Thyroid gland (tissue), 4 donors: ENCODE measurements at regions of chrX and their contacts with region 1.

Region 1: GRCh38 chrX:72003811-72004750 is 93.4 kb downstream of the NHSL2 start:
- DNase-seq: peak; percentile 70 to 72
- H3K4me3 ChIP-seq: no peak overlapping the region
- H3K27ac ChIP-seq: peak overlapping the region in 1 of 3 donors; percentile 46
- H3K4me1 ChIP-seq: peaks cover 0 to 4% of the 10 kb centered on the region in 2 donors
- H3K27me3 ChIP-seq: no peaks in the 10 kb centered on the region
- CTCF ChIP-seq: peak in 5 of 6 experiments; percentile 15 to 41 (median 38)
- POLR2A ChIP-seq: no peak

Region 2: DNA sequence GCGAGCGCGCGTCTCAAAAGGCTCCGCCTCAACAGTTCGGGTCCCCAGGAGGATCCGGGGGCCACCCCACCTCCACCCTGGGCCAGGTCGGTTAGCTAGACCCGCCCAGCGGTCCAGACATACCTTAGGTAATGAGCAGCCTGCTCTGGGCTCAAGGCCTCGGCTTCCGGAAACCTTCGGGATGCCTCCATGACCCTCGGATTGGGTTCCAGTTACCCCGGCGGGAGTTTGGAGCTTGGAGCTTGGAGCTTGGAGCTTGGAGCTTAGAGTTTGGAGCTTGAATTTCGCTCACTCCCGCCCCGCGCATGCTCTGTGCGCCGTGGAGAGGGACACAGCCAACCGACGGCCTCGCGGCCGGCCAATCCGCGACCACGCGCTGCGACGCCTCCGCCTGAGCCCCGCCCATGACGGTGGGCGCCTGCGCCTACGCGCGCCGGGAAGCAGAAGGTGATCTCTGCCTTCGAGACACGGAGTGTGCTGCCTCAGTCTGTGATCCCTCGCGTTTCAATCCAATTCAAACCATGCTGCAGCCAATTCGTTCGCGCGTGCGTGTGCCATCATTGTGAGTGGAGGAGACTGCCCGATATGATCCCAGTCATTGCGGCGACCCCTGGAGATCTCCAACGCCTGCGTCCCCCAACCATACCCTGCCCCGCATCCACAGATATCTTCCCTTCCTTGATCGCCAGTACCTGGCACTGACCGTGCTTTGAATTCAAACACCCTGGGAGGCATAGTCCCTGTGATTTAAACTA is 234.8 kb after region 1 on chrX and contains the start of gene ERCC6L:
- intact Hi-C with region 1: no loop called
- DNase-seq: peak; percentile 86 to 91
- H3K4me3 ChIP-seq: peak within 1 kb of the TSS in 1 of 3 donors; percentile 2
- H3K27ac ChIP-seq: no peak within 1 kb of the TSS
- H3K4me1 ChIP-seq: no peaks in the 10 kb centered on the region
- H3K27me3 ChIP-seq: no peaks in the 10 kb centered on the region
- CTCF ChIP-seq: no peak
- POLR2A ChIP-seq: peak in 1 of 2 donors; percentile 74
- total RNA-seq, gene ERCC6L: 0.13 TPM in 1 of 4 donors, not detected in the others

Region 3: DNA sequence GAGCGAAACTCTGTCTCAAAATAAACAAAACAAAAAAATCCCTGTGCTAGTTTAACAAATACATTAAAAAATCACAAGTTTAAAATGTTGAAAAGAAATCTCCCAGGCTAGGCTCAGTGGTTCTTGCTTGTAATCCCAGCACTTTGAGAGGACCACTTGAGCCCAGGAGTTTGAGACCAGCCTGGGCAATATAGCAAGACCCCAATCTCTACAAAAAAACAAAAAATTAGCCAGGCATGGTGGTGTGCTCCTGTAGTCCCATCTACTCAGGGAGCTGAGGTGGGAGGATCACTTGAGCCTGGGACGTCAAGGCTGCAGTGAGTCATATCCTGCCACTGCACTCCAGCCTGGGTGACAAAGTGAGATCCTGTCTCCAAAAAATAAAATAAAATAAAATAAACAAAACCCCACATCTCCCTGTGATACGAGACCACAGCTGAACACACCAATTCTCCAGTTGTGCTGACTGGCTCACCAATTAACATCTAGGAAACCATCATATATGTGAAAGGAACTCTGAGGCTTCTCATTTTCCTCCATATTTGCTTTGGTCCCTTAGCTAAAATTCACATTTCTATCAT is 265.7 kb after region 1 on chrX:
- intact Hi-C with region 1: loop called (anchors 10 kb)
- DNase-seq: no peak
- H3K4me3 ChIP-seq: no peak overlapping the region
- H3K27ac ChIP-seq: no peak overlapping the region
- H3K4me1 ChIP-seq: peaks cover 0 to under 1% of the 10 kb centered on the region in 2 donors
- H3K27me3 ChIP-seq: no peaks in the 10 kb centered on the region
- CTCF ChIP-seq: no peak
- POLR2A ChIP-seq: no peak